ENCODE measurements at regions of chr11 and their contacts with region 1.

Region 1: DNA sequence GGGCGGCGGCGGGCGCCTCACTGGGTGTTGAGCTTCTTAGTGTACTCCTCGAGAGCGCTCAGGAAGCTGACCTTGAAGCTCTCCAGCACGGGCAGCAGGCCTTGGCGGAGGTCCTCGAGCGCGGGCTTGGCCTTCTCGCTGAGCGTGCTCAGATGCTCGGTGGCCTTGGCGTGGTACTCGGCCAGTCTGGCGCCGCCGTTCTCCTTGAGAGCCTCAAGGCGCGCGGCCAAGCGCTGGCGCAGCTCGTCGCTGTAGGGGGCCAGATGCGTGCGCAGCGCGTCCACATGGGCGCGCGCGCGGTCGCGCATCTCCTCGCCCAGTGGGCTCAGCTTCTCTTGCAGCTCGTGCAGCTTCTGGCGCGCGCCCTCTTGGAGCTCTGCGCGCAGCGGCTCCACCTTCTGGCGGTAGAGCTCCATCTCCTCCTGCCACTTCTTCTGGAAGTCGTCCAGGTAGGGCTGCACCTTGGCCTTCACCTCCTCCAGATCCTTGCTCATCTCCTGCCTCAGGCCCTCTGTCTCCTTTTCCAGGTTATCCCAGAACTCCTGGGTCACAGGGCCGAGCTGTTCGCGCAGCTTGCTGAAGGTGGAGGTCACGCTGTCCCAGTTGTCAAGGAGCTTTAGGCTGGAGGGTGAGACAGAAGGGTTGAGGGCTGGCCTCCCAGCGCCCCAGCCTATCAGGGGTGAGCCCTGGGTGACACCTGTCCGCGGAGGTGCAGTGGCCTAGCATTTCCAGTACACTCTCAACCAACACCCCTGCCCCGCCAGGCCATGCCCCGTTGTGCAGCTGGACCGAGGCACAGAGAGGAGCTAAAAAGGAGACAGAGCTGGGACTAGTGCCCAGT is 1.4 kb downstream of the APOA1 start:
- DNase-seq: peak; percentile 61
- ATAC-seq: peak; percentile 1; the same call in 2 of the 3 replicates
- H3K4me3 ChIP-seq: peak overlapping the region; percentile 75 to 95 (median 92)
- H3K27ac ChIP-seq: peak overlapping the region; percentile 99
- H3K4me1 ChIP-seq: peaks cover 87% of the 10 kb centered on the region
- H3K27me3 ChIP-seq: no peaks in the 10 kb centered on the region
- CTCF ChIP-seq: peak; percentile 86
- EP300 ChIP-seq: no peak
- POLR2A ChIP-seq: no peak; a peak in 1 of 4 replicates
- RAD21 ChIP-seq: peak; percentile 90

Region 2: GRCh38 chr11:116787786-116788486 is 48.1 kb before region 1 on chr11 and contains the start of gene ZPR1:
- CTCF ChIA-PET with region 1: interaction called, 23 read pairs
- POLR2A ChIA-PET with region 1: interaction called, 1,365 read pairs
- in situ Hi-C with region 1: loop called (anchors 5 kb)
- intact Hi-C with region 1: loop called (anchors 1 kb)
- DNase-seq: peak; percentile 37
- ATAC-seq: peak; percentile 55
- H3K4me3 ChIP-seq: peak within 1 kb of the TSS; percentile 79 to 90 (median 86)
- H3K27ac ChIP-seq: peak within 1 kb of the TSS; percentile 61
- H3K4me1 ChIP-seq: peaks cover 58% of the 10 kb centered on the region
- H3K27me3 ChIP-seq: no peaks in the 10 kb centered on the region; a peak in 1 of 5 replicates
- CTCF ChIP-seq: no peak
- EP300 ChIP-seq: no peak
- POLR2A ChIP-seq: peak; percentile 58 to 71; a peak in 3 of 4 replicates
- RAD21 ChIP-seq: no peak
- total RNA-seq, gene ZPR1: 79.3 and 102 TPM in 2 replicates

Region 3: GRCh38 chr11:116813781-116814471 is 22.1 kb before region 1 on chr11:
- CTCF ChIA-PET with region 1: no interaction called
- POLR2A ChIA-PET with region 1: interaction called, 778 read pairs
- in situ Hi-C with region 1: no loop called
- intact Hi-C with region 1: no loop called
- DNase-seq: peak; percentile 50
- ATAC-seq: peak; percentile 77
- H3K4me3 ChIP-seq: no peak overlapping the region; a peak in 1 of 6 replicates
- H3K27ac ChIP-seq: peak overlapping the region; percentile 70
- H3K4me1 ChIP-seq: peaks cover 83% of the 10 kb centered on the region
- H3K27me3 ChIP-seq: no peaks in the 10 kb centered on the region
- CTCF ChIP-seq: no peak
- EP300 ChIP-seq: peak in 1 of 2 experiments; percentile 25; a peak in 2 of 4 replicates
- POLR2A ChIP-seq: peak in 1 of 2 experiments; percentile 24; a peak in 1 of 4 replicates
- RAD21 ChIP-seq: no peak

Region 4: DNA sequence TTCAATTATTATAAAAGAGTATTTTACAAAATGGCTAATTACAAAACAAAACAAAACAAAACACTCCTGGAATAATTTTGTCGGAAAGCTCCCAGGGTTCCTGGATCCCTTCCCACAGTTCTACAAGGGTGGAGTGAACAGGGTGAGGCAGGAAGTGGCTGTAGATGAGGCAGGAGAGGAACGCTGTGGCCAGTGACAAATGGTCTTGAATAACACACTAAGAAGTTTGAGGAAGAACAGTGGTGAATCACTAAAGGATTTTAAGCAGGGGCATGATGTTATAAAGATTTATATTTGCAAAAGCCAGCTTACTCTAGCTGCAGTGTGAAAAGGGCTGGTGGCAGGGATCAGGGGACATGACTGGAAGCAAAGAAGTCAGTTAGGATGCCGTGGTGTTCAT is 35.2 kb after region 1 on chr11:
- CTCF ChIA-PET with region 1: no interaction called
- POLR2A ChIA-PET with region 1: interaction called, 21 read pairs
- in situ Hi-C with region 1: no loop called
- intact Hi-C with region 1: no loop called
- DNase-seq: no peak
- ATAC-seq: no peak
- H3K4me3 ChIP-seq: no peak overlapping the region
- H3K27ac ChIP-seq: no peak overlapping the region
- H3K4me1 ChIP-seq: peaks cover 20% of the 10 kb centered on the region
- H3K27me3 ChIP-seq: no peaks in the 10 kb centered on the region
- CTCF ChIP-seq: no peak
- EP300 ChIP-seq: no peak
- POLR2A ChIP-seq: no peak
- RAD21 ChIP-seq: no peak

Region 5: DNA sequence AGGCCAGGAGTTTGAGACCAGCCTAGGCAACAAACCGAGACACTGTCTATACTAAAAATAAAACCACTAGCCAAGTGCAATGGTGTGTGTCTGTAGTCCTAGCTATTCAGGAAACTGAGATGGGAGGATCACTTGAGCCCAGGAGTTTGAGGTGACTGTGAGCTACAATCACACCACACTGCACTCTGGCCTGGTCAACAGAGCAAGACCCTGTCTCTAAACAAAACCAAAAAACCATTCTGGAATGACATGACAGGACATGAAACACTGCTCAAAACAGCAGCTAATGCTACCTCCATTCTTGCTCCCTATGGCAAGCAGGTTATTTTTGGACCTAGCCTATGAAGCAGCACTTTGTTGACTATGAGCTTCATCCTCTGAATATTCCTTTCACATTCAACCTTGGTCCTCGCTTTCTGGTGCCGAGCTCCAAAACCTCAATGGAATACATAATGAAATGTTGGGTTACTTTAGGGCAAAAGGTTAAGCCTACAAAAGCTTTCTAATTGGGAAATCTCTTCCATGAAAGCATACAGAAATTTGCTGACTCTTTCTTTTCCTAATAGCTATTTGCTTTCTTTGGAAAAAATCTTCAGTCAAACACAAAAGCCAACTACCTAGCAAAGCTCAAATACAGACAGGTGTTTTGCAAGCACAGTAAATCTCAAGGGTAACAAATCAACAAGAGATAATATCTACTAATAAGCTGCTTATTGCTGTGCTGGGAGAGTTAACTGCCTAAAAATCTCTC is 241.1 kb after region 1 on chr11:
- CTCF ChIA-PET with region 1: no interaction called
- POLR2A ChIA-PET with region 1: interaction called, 14 read pairs
- in situ Hi-C with region 1: no loop called
- intact Hi-C with region 1: no loop called
- DNase-seq: peak; percentile 96
- ATAC-seq: peak; percentile 91
- H3K4me3 ChIP-seq: peak overlapping the region in 1 of 3 experiments; percentile 5; a peak in 1 of 6 replicates
- H3K27ac ChIP-seq: peak overlapping the region; percentile 57
- H3K4me1 ChIP-seq: peaks cover 53% of the 10 kb centered on the region
- H3K27me3 ChIP-seq: no peaks in the 10 kb centered on the region
- CTCF ChIP-seq: no peak
- EP300 ChIP-seq: peak in 1 of 2 experiments; percentile 89; a peak in 2 of 4 replicates
- POLR2A ChIP-seq: no peak
- RAD21 ChIP-seq: no peak

Region 6: GRCh38 chr11:117107701-117108590 is 271.9 kb after region 1 on chr11:
- CTCF ChIA-PET with region 1: no interaction called
- POLR2A ChIA-PET with region 1: interaction called, 32 read pairs
- in situ Hi-C with region 1: no loop called
- intact Hi-C with region 1: no loop called
- DNase-seq: no peak
- ATAC-seq: no peak
- H3K4me3 ChIP-seq: no peak overlapping the region; a peak in 1 of 6 replicates
- H3K27ac ChIP-seq: no peak overlapping the region
- H3K4me1 ChIP-seq: peaks cover 15% of the 10 kb centered on the region
- H3K27me3 ChIP-seq: no peaks in the 10 kb centered on the region
- CTCF ChIP-seq: no peak
- EP300 ChIP-seq: no peak
- POLR2A ChIP-seq: no peak
- RAD21 ChIP-seq: no peak

Measured in HepG2 (cell line).